Mammary epithelial cell (primary cell): ENCODE measurements at regions of chr5 and their contacts with region 1.

Region 1: DNA sequence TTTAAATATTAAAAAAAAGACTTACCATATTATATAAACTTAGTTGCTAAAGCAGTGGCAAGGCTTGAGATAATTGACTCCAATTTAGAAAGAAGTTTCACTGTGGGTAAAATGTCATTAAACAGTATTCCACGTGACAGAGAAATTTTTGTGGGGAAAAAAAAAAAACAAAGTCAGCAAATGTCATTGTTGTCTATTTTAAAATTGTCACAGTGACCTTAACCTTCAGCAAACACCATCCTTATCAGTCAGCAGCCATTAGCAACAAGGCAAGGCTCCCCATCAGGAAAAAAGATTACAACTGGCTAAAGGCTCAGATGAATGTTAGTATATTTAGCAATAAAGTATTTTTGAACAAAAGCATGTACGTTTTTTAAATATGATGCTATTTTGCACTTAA is 99.3 kb upstream of the CDH18 start:
- DNase-seq: no peak
- H3K4me3 ChIP-seq: no peak overlapping the region
- H3K27ac ChIP-seq: no peak overlapping the region
- H3K4me1 ChIP-seq: no peaks in the 10 kb centered on the region
- H3K27me3 ChIP-seq: no peaks in the 10 kb centered on the region
- CTCF ChIP-seq: no peak

Region 2: GRCh38 chr5:20055721-20056120 is 31.6 kb before region 1 on chr5:
- CTCF ChIA-PET with region 1: no interaction called
- dilution Hi-C with region 1: no loop called
- in situ Hi-C with region 1: no loop called
- intact Hi-C with region 1: no loop called
- DNase-seq: no peak
- H3K4me3 ChIP-seq: no peak overlapping the region
- H3K27ac ChIP-seq: no peak overlapping the region
- H3K4me1 ChIP-seq: no peaks in the 10 kb centered on the region
- H3K27me3 ChIP-seq: no peaks in the 10 kb centered on the region
- CTCF ChIP-seq: no peak

Region 3: DNA sequence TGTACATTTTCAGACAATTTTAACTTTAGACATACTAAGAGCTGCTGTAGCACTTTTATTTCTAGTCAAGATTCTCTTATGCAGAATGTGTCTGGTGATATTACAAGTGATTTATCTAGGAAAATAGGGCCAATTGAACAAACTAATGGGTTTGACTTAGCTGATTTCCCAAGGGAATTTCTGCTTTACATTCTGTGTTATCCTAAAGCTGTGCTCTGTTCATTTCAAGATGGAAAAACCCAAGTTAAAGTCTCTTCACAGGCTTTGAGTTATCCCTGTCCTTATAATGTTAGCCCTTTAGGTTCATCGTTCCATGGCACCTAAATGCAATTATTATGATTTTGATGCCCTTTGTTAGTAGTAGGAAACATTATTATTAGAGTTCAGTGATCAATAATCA is 605.6 kb after region 1 on chr5:
- CTCF ChIA-PET with region 1: interaction called, 10 read pairs
- dilution Hi-C with region 1: no loop called
- in situ Hi-C with region 1: no loop called
- intact Hi-C with region 1: no loop called
- DNase-seq: no peak
- H3K4me3 ChIP-seq: no peak overlapping the region
- H3K27ac ChIP-seq: no peak overlapping the region
- H3K4me1 ChIP-seq: peaks cover 3% of the 10 kb centered on the region
- H3K27me3 ChIP-seq: no peaks in the 10 kb centered on the region
- CTCF ChIP-seq: no peak